ENCODE measurements at regions of chr1 and their contacts with region 1.

Region 1: DNA sequence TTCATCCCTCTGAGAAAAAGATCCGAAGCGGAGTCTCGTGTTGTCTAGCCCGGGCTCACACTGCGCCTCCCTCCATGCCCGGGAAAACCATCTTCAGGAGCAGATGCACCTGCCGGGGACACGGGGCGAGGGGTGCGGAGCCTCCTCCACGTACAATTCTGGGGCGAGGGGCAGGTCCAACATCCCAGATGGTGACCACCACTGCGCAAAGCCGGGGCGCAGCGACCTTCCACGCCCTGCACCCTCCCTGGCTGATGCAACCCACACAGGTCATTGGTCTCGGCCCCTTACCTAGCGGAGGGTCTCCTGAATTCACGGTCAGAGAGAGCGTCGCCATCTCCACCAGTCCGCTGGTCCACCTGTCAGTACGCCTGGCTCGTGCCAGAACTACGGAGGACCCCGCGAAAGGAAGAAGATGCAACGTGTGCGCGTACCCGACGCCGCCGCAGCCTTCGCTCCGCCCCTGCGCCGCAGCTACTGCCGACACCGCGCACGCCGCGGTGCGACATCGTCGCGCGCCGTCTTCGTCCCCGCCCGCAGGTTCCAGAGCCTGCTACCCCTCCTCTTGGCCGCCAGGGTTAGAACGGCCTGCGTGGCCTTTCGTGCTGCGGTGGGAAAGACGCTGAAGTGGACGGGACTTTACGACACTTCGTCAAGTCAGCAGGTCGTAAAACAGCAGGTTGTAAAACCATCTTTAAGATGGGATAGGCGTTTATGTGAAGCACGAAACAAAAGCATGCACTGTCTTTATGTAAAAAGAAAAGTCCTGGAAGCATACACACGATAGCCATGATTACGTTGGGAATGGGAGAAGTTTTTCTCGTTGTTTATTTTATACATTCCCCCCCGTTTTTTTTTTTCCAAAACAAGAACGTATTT is at the start of gene EPRS1:
- DNase-seq: peak; percentile 96 to 98
- ATAC-seq: peak; percentile 99
- H3K4me3 ChIP-seq: peak within 1 kb of the TSS; percentile 71 to 74
- H3K27ac ChIP-seq: peak within 1 kb of the TSS in 1 of 2 donors; percentile 84
- H3K4me1 ChIP-seq: no peaks in the 10 kb centered on the region
- H3K27me3 ChIP-seq: no peaks in the 10 kb centered on the region
- total RNA-seq, gene EPRS1: 66.1 to 69.3 TPM

Region 2: GRCh38 chr1:219990782-219991510 is 55.3 kb before region 1 on chr1:
- intact Hi-C with region 1: loop called in 1 of 2 experiments (anchors 5 kb)
- DNase-seq: no peak
- ATAC-seq: peak; percentile 68
- H3K4me3 ChIP-seq: no peak overlapping the region
- H3K27ac ChIP-seq: no peak overlapping the region
- H3K4me1 ChIP-seq: no peaks in the 10 kb centered on the region
- H3K27me3 ChIP-seq: no peaks in the 10 kb centered on the region

Measured in aorta (tissue), 5 donors.